ENCODE measurements at regions of chr15 and their contacts with region 1.

Region 1: GRCh38 chr15:39756806-39757522 is 25.7 kb downstream of the FSIP1 start:
- DNase-seq: peak; percentile 43
- ATAC-seq: no peak
- H3K4me3 ChIP-seq: no peak overlapping the region
- H3K27ac ChIP-seq: no peak overlapping the region
- H3K4me1 ChIP-seq: no peaks in the 10 kb centered on the region
- H3K27me3 ChIP-seq: no peaks in the 10 kb centered on the region
- CTCF ChIP-seq: peak; percentile 47
- EP300 ChIP-seq: no peak
- POLR2A ChIP-seq: no peak
- RAD21 ChIP-seq: 0 out of 2 replicates have a peak, but pooled peaks have one; percentile 24

Region 2: DNA sequence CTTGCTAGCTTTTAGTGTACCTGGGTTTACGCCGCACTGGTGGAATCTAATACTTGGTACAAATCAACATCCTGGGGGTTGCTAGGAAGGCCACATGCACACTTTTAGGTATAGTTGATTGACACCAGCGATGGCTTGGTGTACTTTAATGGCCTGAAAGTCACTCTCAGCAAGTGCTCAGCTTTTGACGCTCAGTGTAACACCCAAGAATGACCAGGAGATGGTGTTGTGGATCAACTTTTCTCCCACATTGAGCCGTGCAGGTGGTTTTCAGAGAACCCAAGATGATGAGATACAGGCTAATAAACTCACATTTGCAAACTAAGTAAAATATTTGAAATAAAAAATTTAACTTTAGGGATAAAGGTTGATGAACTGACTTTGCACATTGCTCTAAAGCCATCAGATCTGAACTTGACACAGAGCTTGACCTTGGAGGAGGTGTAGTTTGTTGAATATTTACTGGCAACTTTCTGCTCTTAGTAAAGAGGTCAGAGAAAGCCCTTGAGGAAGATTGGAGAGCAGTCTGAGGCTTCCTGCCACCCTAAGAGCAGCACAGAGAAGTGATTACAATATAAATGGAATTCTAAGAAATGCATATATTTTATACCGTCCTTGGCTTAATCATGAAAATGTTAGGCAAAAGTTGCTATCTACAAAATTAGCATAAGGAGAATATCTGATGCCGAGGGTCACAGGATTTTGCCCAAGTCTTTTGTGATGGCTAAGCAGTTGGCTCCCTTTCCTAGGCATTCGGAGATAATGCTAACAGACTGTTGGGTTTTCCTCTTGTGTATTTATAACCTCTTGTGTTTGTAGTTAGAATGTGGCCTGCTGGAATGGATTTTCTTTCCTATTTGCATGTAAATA is 1048.9 kb before region 1 on chr15:
- CTCF ChIA-PET with region 1: interaction called, 6 read pairs
- POLR2A ChIA-PET with region 1: no interaction called
- in situ Hi-C with region 1: no loop called
- intact Hi-C with region 1: loop called (anchors 2 kb)
- DNase-seq: peak; percentile 39
- ATAC-seq: peak; percentile 88
- H3K4me3 ChIP-seq: no peak overlapping the region
- H3K27ac ChIP-seq: no peak overlapping the region
- H3K4me1 ChIP-seq: peaks cover under 1% of the 10 kb centered on the region; the same call in 1 of the 2 replicates
- H3K27me3 ChIP-seq: peaks cover 0 to 11% of the 10 kb centered on the region in 2 experiments; a peak in 2 of 5 replicates
- CTCF ChIP-seq: peak; percentile 78
- EP300 ChIP-seq: no peak
- POLR2A ChIP-seq: no peak
- RAD21 ChIP-seq: peak; percentile 53; the same call in 1 of the 2 replicates

Region 3: DNA sequence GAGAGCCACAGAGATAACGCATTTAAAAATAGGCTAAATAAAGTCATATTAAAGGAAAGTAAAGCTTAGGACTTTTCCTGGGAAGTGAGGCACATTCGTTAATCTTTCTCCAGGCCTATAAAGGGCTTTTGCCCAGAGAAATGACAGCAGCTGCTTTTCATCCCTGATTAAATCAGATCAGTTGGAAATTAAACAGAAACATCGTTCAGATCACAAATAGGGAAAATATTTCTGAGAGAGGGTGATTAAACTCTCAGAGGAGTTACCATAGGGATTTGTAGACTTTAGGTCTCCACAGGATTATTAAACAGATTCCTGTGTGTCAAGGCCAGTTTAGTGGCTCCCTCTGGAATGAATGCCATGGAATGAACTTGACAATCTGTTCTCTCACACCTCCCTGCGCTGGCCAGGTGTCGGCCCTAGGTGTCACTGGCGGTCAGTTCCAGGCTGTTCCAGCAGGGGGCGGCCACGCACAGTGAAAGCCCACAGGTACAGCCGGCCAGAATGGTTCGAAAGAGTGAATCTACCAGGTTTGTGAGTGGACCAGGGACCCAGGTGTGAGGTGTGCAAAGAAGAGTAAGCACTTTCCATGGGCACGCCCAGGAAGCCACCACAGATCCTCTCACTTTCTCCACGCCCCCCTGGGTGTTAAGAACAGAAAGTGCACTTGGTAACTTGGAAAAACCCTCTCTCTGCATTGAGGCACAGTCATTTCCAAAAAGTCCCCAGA is 939.4 kb before region 1 on chr15:
- CTCF ChIA-PET with region 1: interaction called, 13 read pairs
- POLR2A ChIA-PET with region 1: no interaction called
- in situ Hi-C with region 1: no loop called
- intact Hi-C with region 1: no loop called
- DNase-seq: peak; percentile 66
- ATAC-seq: peak; percentile 100
- H3K4me3 ChIP-seq: no peak overlapping the region
- H3K27ac ChIP-seq: no peak overlapping the region
- H3K4me1 ChIP-seq: no peaks in the 10 kb centered on the region
- H3K27me3 ChIP-seq: peaks cover 0 to 5% of the 10 kb centered on the region in 2 experiments; a peak in 2 of 5 replicates
- CTCF ChIP-seq: peak; percentile 98
- EP300 ChIP-seq: no peak
- POLR2A ChIP-seq: no peak
- RAD21 ChIP-seq: peak; percentile 91

Region 4: DNA sequence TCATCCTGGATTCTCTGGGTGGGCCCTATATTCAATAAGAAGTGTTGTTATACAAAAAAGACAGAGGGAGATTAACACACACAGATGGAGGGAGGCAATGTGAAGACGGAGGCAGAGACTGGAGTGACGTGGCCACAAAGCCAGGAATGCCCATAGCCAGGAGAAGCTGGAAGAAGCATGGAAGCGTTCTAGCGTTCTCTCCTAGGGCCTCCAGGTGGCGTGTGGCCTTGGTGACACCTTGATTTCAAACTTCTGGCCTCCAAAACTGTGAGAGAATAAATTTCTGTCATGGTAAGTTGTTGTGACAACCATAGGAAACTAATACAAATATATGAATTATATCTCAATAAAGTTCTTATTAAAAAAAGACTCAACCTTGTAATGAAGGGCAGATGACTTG is 154.8 kb before region 1 on chr15:
- CTCF ChIA-PET with region 1: interaction called, 5 read pairs
- POLR2A ChIA-PET with region 1: no interaction called
- in situ Hi-C with region 1: loop called (anchors 10 kb)
- intact Hi-C with region 1: loop called (anchors 1 kb)
- DNase-seq: peak; percentile 40
- ATAC-seq: peak; percentile 83
- H3K4me3 ChIP-seq: no peak overlapping the region
- H3K27ac ChIP-seq: no peak overlapping the region
- H3K4me1 ChIP-seq: no peaks in the 10 kb centered on the region
- H3K27me3 ChIP-seq: peaks cover 1 to 5% of the 10 kb centered on the region in 2 experiments; a peak in 2 of 5 replicates
- CTCF ChIP-seq: peak; percentile 65
- EP300 ChIP-seq: no peak
- POLR2A ChIP-seq: no peak
- RAD21 ChIP-seq: no peak

Region 5: GRCh38 chr15:39686000-39686613 is 70.9 kb before region 1 on chr15:
- CTCF ChIA-PET with region 1: interaction called, 36 read pairs
- POLR2A ChIA-PET with region 1: no interaction called
- in situ Hi-C with region 1: loop called (anchors 5 kb)
- intact Hi-C with region 1: loop called (anchors 1 kb)
- DNase-seq: peak; percentile 43
- ATAC-seq: peak; percentile 55; the same call in 2 of the 3 replicates
- H3K4me3 ChIP-seq: no peak overlapping the region
- H3K27ac ChIP-seq: no peak overlapping the region
- H3K4me1 ChIP-seq: no peaks in the 10 kb centered on the region
- H3K27me3 ChIP-seq: no peaks in the 10 kb centered on the region
- CTCF ChIP-seq: peak; percentile 74
- EP300 ChIP-seq: no peak
- POLR2A ChIP-seq: no peak
- RAD21 ChIP-seq: no peak

Region 6: GRCh38 chr15:39692356-39693327 is 64.3 kb before region 1 on chr15:
- CTCF ChIA-PET with region 1: interaction called, 36 read pairs
- POLR2A ChIA-PET with region 1: no interaction called
- in situ Hi-C with region 1: loop called (anchors 5 kb)
- intact Hi-C with region 1: no loop called
- DNase-seq: no peak
- ATAC-seq: no peak
- H3K4me3 ChIP-seq: no peak overlapping the region
- H3K27ac ChIP-seq: no peak overlapping the region
- H3K4me1 ChIP-seq: no peaks in the 10 kb centered on the region
- H3K27me3 ChIP-seq: no peaks in the 10 kb centered on the region
- CTCF ChIP-seq: no peak
- EP300 ChIP-seq: no peak
- POLR2A ChIP-seq: no peak
- RAD21 ChIP-seq: no peak

Measured in HepG2 (cell line).